H1 (cell line): ENCODE measurements at regions of chr18 and their contacts with region 1.

Region 1: DNA sequence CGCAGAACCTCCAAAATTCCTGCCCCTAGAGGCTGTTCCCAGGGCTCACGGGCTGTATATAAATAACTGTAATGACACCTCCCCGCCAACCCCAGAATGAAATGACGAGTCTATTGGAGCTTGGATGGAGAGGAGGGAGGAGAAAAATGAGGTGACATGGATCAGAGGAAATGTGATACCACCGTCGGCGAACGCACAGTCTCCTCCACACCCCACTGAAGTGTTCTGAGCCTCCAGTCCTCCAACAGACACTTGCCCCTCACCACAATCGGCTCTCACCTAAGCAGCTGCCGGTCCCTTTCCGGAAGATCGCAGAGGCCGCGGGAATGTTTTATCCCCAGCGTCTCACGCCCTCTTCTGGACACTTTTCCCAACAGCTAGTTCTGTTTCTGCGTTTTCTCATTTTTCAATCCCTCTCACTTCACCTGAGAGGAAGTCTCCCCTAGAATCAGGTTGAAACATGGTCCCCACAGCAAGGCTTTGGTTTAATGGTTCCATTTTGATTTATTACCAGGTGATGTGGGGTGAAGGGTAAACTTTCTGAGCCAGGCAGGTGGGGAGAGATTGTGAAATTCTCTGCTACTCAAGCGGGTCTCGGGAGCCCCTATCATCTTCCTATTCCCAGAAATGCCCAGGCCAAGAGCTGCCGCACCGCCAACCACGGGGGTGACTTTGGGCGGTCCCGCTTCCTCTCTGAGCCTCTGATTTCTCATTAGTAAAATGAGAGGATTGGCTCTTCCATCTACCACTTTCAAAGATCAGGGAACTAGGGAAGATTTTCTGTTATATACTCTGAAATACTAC is 9.1 kb upstream of the MYO5B start:
- DNase-seq: peak in 1 of 2 experiments; percentile 81
- H3K4me3 ChIP-seq: peak overlapping the region in 3 of 4 experiments; percentile 20 to 44 (median 34); a peak in 5 of 8 replicates
- H3K27ac ChIP-seq: no peak overlapping the region
- H3K4me1 ChIP-seq: no peaks in the 10 kb centered on the region
- H3K27me3 ChIP-seq: peaks cover 0 to 5% (median 0%) of the 10 kb centered on the region in 4 experiments; a peak in 2 of 7 replicates
- CTCF ChIP-seq: peak; percentile 50 to 80 (median 72)
- EP300 ChIP-seq: no peak
- POLR2A ChIP-seq: no peak
- RAD21 ChIP-seq: peak; percentile 88 to 90

Region 2: DNA sequence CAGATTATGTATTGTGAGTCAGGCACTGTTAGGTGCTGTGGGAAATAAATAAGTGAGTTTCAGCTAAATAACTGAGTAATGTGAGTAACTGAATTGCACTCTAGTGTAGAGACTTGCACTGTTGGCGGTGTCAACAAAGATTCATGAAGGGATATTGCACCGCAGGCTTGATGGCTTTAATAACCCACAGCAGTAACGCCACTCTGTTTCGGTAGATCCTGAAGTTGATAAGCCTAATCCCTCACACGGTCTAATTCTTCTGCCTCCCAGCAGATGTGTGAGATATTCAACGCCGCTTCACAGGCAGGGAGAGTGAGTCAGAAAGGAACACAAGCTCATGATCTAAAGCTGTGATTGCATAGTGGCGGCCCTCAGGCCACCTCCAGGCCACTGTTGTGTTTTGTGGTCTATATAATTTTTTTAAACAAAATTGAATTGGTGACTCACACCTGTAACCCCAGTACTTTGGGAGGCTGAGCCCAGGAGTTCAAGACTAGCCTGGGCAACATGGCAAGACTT is 547.9 kb before region 1 on chr18:
- CTCF ChIA-PET with region 1: no interaction called
- POLR2A ChIA-PET with region 1: no interaction called
- DNase-seq: no peak
- H3K4me3 ChIP-seq: no peak overlapping the region
- H3K27ac ChIP-seq: no peak overlapping the region
- H3K4me1 ChIP-seq: peaks cover 0 to 16% (median 4%) of the 10 kb centered on the region in 4 experiments; a peak in 5 of 7 replicates
- H3K27me3 ChIP-seq: no peaks in the 10 kb centered on the region
- CTCF ChIP-seq: no peak
- EP300 ChIP-seq: no peak
- POLR2A ChIP-seq: no peak
- RAD21 ChIP-seq: no peak

Region 3: GRCh38 chr18:50009773-50010335 is 194.1 kb before region 1 on chr18:
- CTCF ChIA-PET with region 1: interaction called, 11 read pairs
- POLR2A ChIA-PET with region 1: no interaction called
- DNase-seq: peak; percentile 21 to 62
- H3K4me3 ChIP-seq: no peak overlapping the region
- H3K27ac ChIP-seq: no peak overlapping the region
- H3K4me1 ChIP-seq: no peaks in the 10 kb centered on the region; a peak in 1 of 7 replicates
- H3K27me3 ChIP-seq: no peaks in the 10 kb centered on the region
- CTCF ChIP-seq: peak; percentile 72 to 87 (median 84)
- EP300 ChIP-seq: no peak
- POLR2A ChIP-seq: no peak
- RAD21 ChIP-seq: peak; percentile 73 to 78

Region 4: GRCh38 chr18:50051288-50051687 is 152.7 kb before region 1 on chr18:
- CTCF ChIA-PET with region 1: interaction called, 30 read pairs
- POLR2A ChIA-PET with region 1: no interaction called
- DNase-seq: no peak
- H3K4me3 ChIP-seq: no peak overlapping the region
- H3K27ac ChIP-seq: no peak overlapping the region
- H3K4me1 ChIP-seq: no peaks in the 10 kb centered on the region
- H3K27me3 ChIP-seq: no peaks in the 10 kb centered on the region
- CTCF ChIP-seq: peak; percentile 34 to 64 (median 62)
- EP300 ChIP-seq: no peak
- POLR2A ChIP-seq: no peak
- RAD21 ChIP-seq: peak; percentile 62 to 70

Region 5: DNA sequence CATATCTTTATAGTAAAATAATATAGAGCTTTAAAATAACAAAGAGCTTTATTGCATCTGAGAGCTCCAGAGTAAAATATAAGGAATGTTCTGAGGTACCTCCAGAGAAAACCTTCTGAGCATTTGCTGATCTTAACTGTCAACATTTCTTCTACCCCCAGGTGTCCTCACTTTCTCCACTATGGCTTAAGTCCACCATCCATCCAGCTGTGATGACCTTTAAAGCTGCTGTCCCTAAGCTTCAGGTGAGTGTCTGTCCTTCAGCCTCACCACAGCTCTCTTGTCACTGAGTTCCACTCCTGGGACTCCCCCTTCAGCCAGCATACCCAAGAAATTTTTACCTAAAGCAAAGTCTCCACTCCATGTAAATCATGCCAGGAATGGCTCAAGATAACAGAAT is 147.0 kb before region 1 on chr18:
- CTCF ChIA-PET with region 1: interaction called, 30 read pairs
- POLR2A ChIA-PET with region 1: no interaction called
- DNase-seq: no peak
- H3K4me3 ChIP-seq: no peak overlapping the region
- H3K27ac ChIP-seq: no peak overlapping the region
- H3K4me1 ChIP-seq: no peaks in the 10 kb centered on the region
- H3K27me3 ChIP-seq: no peaks in the 10 kb centered on the region
- CTCF ChIP-seq: peak in 1 of 3 experiments; percentile 8; a peak in 2 of 4 replicates
- EP300 ChIP-seq: no peak
- POLR2A ChIP-seq: no peak
- RAD21 ChIP-seq: 0 out of 4 replicates have a peak, but pooled peaks have one; percentile 9 to 16

Region 6: DNA sequence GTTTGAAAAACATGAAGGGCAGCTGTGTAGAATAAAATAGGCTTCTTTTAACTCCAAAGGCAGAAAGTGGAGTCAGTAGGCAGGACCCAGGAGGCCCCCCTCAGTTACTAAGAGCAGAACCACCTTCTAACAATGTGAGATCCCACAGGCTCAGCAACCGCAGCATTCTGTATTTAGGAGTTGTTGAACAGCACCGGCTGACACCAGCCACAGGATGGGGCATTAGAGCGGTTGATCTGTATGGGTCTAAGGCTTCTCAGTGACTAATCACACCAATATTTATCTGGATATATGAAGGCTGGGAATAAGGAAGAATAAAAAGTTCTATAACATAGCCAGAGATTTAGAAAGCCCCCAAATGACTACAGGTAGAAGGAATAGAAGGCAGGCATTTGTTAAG is 60.7 kb before region 1 on chr18:
- CTCF ChIA-PET with region 1: interaction called, 12 read pairs
- POLR2A ChIA-PET with region 1: no interaction called
- DNase-seq: no peak
- H3K4me3 ChIP-seq: no peak overlapping the region
- H3K27ac ChIP-seq: no peak overlapping the region
- H3K4me1 ChIP-seq: no peaks in the 10 kb centered on the region
- H3K27me3 ChIP-seq: no peaks in the 10 kb centered on the region
- CTCF ChIP-seq: peak; percentile 12 to 24 (median 16); a peak in 3 of 4 replicates
- EP300 ChIP-seq: no peak
- POLR2A ChIP-seq: no peak
- RAD21 ChIP-seq: peak; percentile 34 to 50

Region 7: GRCh38 chr18:50189160-50189559 is 14.8 kb before region 1 on chr18:
- CTCF ChIA-PET with region 1: interaction called, 17 read pairs
- POLR2A ChIA-PET with region 1: interaction called, 6 read pairs
- DNase-seq: no peak
- H3K4me3 ChIP-seq: no peak overlapping the region
- H3K27ac ChIP-seq: no peak overlapping the region
- H3K4me1 ChIP-seq: peaks cover 0 to 11% (median 9%) of the 10 kb centered on the region in 4 experiments; a peak in 5 of 7 replicates
- H3K27me3 ChIP-seq: peaks cover 17 to 31% (median 26%) of the 10 kb centered on the region in 4 experiments
- CTCF ChIP-seq: no peak
- EP300 ChIP-seq: no peak
- POLR2A ChIP-seq: no peak
- RAD21 ChIP-seq: no peak

Region 8: DNA sequence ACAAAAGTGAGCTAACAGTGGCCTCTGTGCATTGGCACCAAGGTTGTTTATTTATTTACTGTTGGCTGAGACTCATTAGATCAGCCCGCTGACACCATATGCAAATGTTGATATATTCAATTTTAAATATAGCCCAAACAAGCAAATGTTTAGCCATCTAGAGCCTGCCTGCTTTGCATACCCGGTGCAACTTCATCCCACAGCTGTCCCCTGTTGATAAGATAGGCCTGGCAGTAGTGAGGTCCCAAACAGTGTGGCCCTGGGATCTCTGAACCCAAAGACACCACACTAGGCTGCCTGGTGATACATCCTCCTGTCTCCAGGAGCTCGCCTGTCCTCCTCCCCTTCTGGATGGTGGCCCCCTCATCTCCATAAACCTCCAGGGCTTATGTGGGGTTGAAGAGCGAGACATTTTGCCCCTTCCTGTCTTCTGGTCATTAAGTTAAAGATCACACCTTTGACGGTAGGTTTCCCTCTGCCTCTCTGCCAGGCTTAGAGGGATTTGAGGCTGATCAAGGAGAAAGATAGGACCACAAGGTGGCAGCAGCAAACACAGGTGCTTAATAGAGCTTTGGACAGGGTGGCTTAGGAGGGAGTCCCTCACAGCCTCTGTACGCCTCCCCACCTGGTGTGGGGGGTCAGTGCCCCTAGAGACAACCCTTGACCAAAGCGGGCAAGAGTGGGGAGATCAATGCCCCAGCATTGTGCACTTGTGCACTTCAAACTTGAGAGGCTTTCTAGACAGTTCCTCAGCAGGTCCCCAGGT is 14.6 kb after region 1 on chr18:
- CTCF ChIA-PET with region 1: interaction called, 24 read pairs
- POLR2A ChIA-PET with region 1: no interaction called
- DNase-seq: peak in 1 of 2 experiments; percentile 60
- H3K4me3 ChIP-seq: no peak overlapping the region
- H3K27ac ChIP-seq: no peak overlapping the region
- H3K4me1 ChIP-seq: no peaks in the 10 kb centered on the region
- H3K27me3 ChIP-seq: no peaks in the 10 kb centered on the region
- CTCF ChIP-seq: peak; percentile 20 to 76 (median 69)
- EP300 ChIP-seq: no peak
- POLR2A ChIP-seq: no peak
- RAD21 ChIP-seq: peak; percentile 64 to 70